Sigmoid colon (tissue), 7 donors: ENCODE measurements at regions of chr2 and their contacts with region 1.

Region 1: DNA sequence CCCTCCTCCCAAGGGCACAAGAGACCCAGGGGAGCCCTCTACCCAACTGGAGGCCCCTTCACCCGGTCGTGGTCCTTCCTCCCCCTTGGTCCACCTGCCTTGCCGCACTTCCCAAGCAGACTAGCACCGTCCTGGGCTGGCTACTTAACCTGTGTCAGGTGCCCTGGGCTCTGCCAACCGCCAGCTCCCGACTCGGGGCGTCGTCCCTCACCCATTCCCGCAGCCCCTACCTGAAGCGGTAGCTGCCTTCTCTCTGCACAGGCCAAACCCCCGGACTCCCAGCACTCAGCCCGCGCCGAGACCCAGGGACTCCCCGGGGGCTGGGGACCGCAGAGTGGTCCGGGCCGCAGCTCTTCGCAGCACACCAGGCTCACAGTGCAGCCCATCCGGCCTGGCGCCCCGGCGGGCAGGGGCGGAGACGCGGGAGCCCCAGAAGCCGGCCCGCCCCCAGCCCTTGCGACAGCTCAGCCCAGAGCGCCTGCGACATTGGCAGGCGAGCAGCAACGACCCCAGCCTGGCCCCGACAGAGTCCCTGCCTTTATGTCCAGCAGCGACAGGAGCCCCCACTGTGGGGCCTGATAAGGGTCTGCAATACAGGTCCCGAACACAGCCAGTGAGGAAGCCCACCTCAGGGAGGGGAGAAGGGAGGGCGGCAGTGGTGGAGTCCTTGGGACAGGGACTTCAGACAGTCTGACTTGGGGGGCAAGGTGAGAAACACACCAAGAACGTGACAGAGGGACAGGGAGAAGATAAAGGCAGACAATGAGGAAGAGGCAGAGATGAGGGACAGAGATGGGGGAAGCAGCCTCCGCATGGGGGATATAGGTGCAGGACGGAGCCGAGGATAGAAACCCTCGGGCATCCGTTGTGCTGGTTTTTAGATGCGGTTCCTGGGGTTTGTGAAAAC is 31.0 kb upstream of the TNS1 start:
- DNase-seq: no peak
- H3K4me3 ChIP-seq: peak overlapping the region in 1 of 4 donors; percentile 9
- H3K27ac ChIP-seq: no peak overlapping the region
- H3K4me1 ChIP-seq: peaks cover 0 to 19% (median 10%) of the 10 kb centered on the region in 4 donors
- H3K27me3 ChIP-seq: peaks cover 0 to 6% (median 0%) of the 10 kb centered on the region in 3 donors
- CTCF ChIP-seq: no peak
- EP300 ChIP-seq: no peak
- POLR2A ChIP-seq: no peak

Region 2: GRCh38 chr2:217994686-217995274 is 39.1 kb before region 1 on chr2:
- intact Hi-C with region 1: loop called (anchors 1 kb)
- DNase-seq: no peak
- H3K4me3 ChIP-seq: no peak overlapping the region
- H3K27ac ChIP-seq: peak overlapping the region; percentile 37 to 76 (median 60)
- H3K4me1 ChIP-seq: peaks cover 0 to 45% (median 32%) of the 10 kb centered on the region in 4 donors
- H3K27me3 ChIP-seq: no peaks in the 10 kb centered on the region
- CTCF ChIP-seq: no peak
- EP300 ChIP-seq: no peak
- POLR2A ChIP-seq: no peak

Region 3: DNA sequence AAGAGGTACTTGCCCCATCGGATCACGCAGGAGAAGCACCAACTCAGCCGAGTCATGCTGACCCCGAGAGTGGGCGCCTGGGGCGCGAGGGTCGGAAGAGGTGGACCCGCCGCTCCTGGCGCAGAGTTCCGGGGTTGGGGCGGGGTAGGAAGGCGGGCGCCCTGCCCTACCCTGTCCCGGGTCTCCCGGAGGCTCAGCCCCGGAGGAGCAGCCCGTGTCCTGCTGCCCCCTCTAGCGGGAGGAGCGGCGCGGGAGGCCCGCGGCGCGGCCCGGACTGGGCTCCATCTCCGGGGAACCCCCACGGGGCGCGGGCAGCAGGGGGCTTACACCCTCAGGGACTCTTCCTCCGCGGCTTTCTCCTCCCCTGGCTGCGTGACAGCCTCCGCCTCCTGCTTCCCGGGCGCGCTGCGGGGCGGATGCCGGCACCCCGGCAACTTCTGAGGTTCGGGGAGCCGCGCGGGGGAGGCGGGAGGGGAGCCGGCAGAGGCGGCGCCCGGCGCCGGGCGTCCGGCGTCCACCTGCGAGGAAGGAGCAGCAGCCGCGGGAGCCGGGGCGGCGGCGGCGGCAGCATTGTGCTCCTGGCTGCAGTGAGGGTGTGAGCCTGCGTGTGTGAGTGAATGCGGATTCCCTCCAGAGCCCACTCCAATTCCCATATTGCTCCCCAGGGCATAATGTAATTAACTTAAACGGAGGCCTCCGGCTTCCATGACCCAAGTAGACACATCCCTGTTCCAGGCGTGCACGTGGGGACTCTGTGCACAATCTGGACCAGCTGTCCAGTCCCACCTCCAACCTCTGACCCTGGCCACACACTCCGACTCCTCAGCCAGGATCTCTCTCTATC is 23.5 kb before region 1 on chr2:
- intact Hi-C with region 1: loop called (anchors 2 kb)
- DNase-seq: peak; percentile 83
- H3K4me3 ChIP-seq: peak overlapping the region; percentile 33 to 56 (median 48)
- H3K27ac ChIP-seq: peak overlapping the region in 1 of 4 donors; percentile 45
- H3K4me1 ChIP-seq: peaks cover 0 to 19% (median 15%) of the 10 kb centered on the region in 4 donors
- H3K27me3 ChIP-seq: peaks cover 5 to 40% (median 8%) of the 10 kb centered on the region in 3 donors
- CTCF ChIP-seq: peak in 3 of 4 experiments; percentile 44 to 73 (median 50)
- EP300 ChIP-seq: no peak
- POLR2A ChIP-seq: no peak

Region 4: GRCh38 chr2:218091746-218092145 is 57.9 kb after region 1 on chr2:
- intact Hi-C with region 1: no loop called
- DNase-seq: no peak
- H3K4me3 ChIP-seq: no peak overlapping the region
- H3K27ac ChIP-seq: no peak overlapping the region
- H3K4me1 ChIP-seq: no peaks in the 10 kb centered on the region
- H3K27me3 ChIP-seq: no peaks in the 10 kb centered on the region
- CTCF ChIP-seq: no peak
- EP300 ChIP-seq: no peak
- POLR2A ChIP-seq: no peak

Region 5: GRCh38 chr2:218168635-218169462 is 135.0 kb after region 1 on chr2:
- intact Hi-C with region 1: no loop called
- DNase-seq: peak; percentile 75
- H3K4me3 ChIP-seq: no peak overlapping the region
- H3K27ac ChIP-seq: no peak overlapping the region
- H3K4me1 ChIP-seq: peaks cover 0 to 10% (median 0%) of the 10 kb centered on the region in 4 donors
- H3K27me3 ChIP-seq: no peaks in the 10 kb centered on the region
- CTCF ChIP-seq: peak; percentile 26 to 63 (median 34)
- EP300 ChIP-seq: no peak
- POLR2A ChIP-seq: no peak